ENCODE measurements at regions of chr22 and their contacts with region 1.

Region 1: GRCh38 chr22:41800348-41801146 is at the start of gene CCDC134:
- ATAC-seq: peak; percentile 96 to 99 (median 98)
- H3K4me3 ChIP-seq: peak within 1 kb of the TSS; percentile 61 to 93 (median 68)
- H3K27ac ChIP-seq: peak within 1 kb of the TSS; percentile 53 to 73
- H3K4me1 ChIP-seq: peaks cover 7 to 17% of the 10 kb centered on the region in 2 donors
- total RNA-seq, gene CCDC134: 7.0 to 19.0 (median 10.2) TPM

Region 2: DNA sequence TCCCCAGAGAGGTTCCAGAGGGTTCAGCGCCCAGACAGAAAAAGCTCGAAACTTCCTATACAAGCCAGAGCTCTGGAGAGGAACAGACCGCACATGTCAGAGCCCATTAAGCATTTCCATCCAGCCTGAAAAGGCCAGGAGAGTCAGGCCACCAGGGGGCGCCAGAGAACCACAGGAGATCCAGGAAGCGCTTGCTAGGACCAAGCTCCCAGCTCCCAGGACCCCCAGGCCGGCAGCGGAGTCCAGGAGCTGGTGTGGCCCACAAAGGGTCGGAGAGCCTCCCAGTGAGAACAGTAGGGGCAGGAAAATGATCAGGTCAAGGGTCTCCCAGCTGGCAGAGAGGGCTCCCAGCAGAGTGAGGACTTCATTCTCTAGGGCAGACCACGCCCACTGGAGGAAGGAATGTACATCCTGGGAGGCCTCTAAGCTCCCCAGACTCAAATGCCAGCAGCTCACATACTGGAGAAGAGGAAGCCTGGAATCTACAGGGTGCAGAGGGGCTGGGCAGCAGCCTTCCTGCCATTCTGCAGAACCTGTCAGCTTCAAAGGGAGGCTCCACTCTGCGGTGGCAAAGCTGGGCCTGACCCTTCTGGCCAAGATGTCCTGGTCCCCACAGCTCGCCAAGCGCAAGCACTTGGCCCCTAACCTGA is 103.3 kb before region 1 on chr22:
- in situ Hi-C with region 1: loop called in 1 of 9 experiments (anchors 25 kb)
- ATAC-seq: peak; percentile 89 to 97 (median 92)
- H3K4me3 ChIP-seq: no peak overlapping the region
- H3K27ac ChIP-seq: no peak overlapping the region
- H3K4me1 ChIP-seq: peaks cover 4 to 8% of the 10 kb centered on the region in 2 donors

Measured in motor neuron (in vitro differentiated cells).